ENCODE measurements at regions of chr19 and their contacts with region 1.

Region 1: GRCh38 chr19:3163230-3163886 is 15.2 kb upstream of the S1PR4 start:
- DNase-seq: no peak
- H3K4me3 ChIP-seq: no peak overlapping the region
- H3K27ac ChIP-seq: no peak overlapping the region
- H3K4me1 ChIP-seq: no peaks in the 10 kb centered on the region
- H3K27me3 ChIP-seq: no peaks in the 10 kb centered on the region
- CTCF ChIP-seq: peak; percentile 68 to 90 (median 84)
- POLR2A ChIP-seq: no peak

Region 2: DNA sequence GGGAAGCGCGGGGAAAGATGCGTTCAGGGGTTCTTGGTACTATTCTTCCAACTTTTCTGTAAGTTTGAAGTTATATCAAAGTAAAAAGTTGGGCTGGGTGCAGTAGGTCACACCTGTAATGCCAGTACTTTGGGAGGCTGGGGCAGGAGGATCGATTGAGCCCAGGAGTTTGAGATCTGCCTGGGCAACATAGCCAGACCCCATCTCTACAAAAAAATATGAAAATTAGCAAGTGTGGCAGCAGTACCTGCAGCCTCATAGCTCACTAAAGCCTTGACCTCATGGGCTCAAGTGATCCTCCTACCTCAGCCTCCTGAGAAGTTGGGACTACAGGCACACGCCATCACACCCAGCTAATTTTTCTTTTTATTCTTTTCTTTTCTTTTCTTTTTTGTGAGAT is 206.2 kb before region 1 on chr19:
- intact Hi-C with region 1: loop called (anchors 5 kb)
- DNase-seq: no peak
- H3K4me3 ChIP-seq: no peak overlapping the region
- H3K27ac ChIP-seq: no peak overlapping the region
- H3K4me1 ChIP-seq: no peaks in the 10 kb centered on the region
- H3K27me3 ChIP-seq: no peaks in the 10 kb centered on the region
- CTCF ChIP-seq: no peak
- POLR2A ChIP-seq: no peak

Region 3: GRCh38 chr19:3108775-3109174 is 54.6 kb before region 1 on chr19:
- intact Hi-C with region 1: no loop called
- DNase-seq: no peak
- H3K4me3 ChIP-seq: no peak overlapping the region
- H3K27ac ChIP-seq: no peak overlapping the region
- H3K4me1 ChIP-seq: peaks cover 46% of the 10 kb centered on the region
- H3K27me3 ChIP-seq: no peaks in the 10 kb centered on the region
- CTCF ChIP-seq: peak in 2 of 3 experiments; percentile 59 to 67
- POLR2A ChIP-seq: no peak

Region 4: DNA sequence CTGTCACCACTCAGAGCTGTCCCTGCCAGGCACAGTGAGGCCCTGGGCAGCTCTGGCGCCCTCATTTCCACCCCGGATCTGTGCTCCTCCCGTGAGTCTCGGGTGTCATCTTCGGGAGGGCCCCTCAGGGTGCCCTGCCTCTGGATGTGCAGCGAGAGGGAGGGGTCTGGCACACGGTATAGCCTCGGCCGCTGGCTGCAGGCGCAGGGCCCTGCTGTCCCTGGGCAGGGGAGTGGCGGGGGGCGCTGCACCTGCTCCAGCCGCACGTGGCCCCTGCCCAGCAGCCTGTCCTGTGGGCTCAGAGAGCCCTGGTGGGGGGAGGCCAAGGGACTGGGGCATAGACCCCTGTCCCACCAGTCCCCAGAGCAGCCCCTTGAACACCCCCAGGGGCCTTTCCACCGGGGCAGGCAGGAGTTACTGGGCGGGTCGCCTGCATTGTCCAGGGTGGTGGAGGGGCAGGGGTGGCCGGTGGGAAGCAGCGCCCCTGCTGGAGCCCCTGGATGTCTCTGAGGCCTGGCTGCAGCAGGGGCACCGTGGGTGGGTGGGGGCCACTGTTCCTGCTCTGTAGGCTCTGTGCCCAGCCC is 43.2 kb before region 1 on chr19:
- intact Hi-C with region 1: loop called (anchors 5 kb)
- DNase-seq: no peak
- H3K4me3 ChIP-seq: no peak overlapping the region
- H3K27ac ChIP-seq: no peak overlapping the region
- H3K4me1 ChIP-seq: no peaks in the 10 kb centered on the region
- H3K27me3 ChIP-seq: no peaks in the 10 kb centered on the region
- CTCF ChIP-seq: no peak
- POLR2A ChIP-seq: no peak

Region 5: DNA sequence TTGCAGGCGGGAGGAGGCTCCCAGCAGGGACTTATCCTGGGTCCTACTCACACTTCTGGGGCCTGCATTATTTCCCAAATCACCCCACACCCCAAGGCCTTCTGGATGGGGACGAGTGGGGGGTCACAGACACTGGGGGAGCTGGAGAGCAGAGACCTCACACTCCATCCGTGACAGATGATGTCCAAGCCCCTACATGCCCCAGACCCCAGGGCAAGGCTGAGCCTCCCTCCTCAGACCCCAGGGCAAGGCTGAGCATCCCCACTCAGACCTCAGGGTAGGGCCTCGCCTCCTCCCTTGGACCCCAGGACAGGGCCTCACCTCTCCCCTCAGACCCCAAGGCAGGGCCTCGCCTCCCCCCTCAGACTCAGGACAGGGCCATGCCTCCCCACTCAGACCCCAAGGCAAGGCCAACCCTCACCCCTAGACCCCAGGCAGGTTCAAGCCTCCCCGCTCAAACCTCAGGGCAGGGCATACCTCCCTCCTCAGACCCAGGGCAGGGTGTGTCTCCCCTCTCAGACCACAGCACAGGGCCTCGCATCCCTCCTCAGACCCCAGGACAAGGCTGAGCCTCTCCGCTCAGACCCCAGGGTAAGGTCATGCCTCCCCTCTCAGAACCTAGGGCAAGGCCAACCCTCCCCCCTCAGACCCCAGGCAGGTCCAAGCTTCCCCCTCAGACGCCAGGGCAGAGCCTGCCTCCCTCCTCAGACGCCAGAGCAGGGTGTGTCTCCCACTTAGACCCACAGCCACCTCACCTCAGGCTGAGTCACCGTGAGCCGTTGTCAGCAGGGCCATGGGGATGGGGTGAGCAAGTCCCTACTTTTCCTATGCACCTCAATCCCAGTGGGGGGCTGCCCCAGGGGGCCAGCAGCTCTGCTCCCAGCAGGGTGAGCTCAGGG is 13.5 kb after region 1 on chr19:
- intact Hi-C with region 1: no loop called
- DNase-seq: no peak
- H3K4me3 ChIP-seq: no peak overlapping the region
- H3K27ac ChIP-seq: no peak overlapping the region
- H3K4me1 ChIP-seq: peaks cover 21% of the 10 kb centered on the region
- H3K27me3 ChIP-seq: no peaks in the 10 kb centered on the region
- CTCF ChIP-seq: no peak
- POLR2A ChIP-seq: no peak

Region 6: DNA sequence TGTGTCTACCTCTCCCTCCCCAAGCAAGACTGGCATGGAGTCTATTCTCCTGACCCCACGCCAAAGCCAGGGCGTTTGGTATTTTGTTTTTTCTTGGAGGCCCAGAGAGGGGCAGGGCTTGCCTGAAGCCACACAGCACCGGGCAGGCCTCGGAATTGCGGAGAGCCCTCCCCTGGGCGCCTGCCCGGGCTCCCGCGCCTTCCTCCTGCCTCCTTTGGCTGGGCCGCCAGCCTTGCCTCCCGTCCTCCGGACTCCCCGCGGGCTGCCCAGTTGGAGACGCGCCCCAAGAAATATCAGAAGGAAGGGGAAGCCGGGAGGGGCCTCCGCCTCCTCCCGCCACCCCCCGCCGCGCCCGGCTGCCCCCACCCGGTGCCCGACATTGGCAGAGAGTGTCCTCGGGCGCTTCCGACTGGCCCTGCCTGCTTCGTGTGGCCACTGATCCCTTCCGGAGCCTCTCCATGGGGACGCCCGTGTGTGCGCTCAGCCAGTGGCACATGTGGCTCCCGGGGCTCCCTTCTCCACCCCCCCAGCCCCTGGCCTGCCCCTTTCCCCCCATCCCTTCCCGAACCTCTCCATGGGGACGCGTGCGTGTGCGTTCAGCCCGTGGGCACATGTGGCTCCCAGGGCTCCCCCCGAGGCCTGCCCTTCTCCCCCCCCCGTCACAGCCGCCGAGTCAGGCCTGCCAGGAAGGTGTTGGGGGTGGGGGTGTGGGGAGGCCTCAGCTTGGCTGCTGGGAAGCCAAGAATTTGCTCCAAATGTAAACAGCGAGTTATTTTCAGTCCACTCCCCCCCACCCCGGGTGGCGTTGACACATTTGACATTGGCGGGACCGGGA is 240.3 kb after region 1 on chr19:
- intact Hi-C with region 1: no loop called
- DNase-seq: peak in 1 of 2 donors; percentile 97
- H3K4me3 ChIP-seq: peak overlapping the region; percentile 46 to 61
- H3K27ac ChIP-seq: peak overlapping the region; percentile 100
- H3K4me1 ChIP-seq: peaks cover 82% of the 10 kb centered on the region
- H3K27me3 ChIP-seq: no peaks in the 10 kb centered on the region
- CTCF ChIP-seq: no peak
- POLR2A ChIP-seq: no peak